ENCODE measurements at regions of chr2 and their contacts with region 1.

Region 1: DNA sequence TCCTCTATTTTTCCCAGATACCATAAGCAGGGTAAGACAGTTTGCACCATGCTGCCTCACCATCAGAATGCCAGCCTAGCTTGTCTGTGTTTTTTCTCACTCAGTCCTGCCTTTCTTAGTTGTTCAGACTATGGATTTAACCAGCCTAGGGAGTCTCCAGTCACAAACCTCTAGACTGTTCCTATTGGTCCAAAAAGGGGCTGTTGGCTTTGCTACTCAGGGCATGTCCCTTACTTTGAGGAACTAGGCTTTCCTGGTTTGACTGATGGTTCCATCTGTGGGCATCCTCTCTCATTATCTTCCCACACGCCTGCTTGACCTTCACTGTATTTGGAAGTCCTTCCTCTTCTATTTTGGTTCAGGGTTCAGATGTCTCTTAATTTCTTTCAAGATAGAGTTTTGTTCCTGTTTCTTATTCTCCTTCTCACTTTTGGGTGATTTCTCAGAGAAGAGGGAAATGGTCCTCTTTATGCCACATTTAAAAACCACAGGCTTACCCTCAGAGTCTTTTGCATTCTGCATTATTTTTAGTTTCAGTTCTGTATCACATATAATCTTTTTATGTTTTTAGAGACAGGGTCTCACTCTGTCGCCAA is 31.3 kb upstream of the TMEM131 start:
- DNase-seq: no peak
- ATAC-seq: peak; percentile 72
- H3K4me3 Mint-ChIP-seq: peak overlapping the region; percentile 80
- H3K27ac Mint-ChIP-seq: peak overlapping the region; percentile 96
- H3K4me1 Mint-ChIP-seq: peaks cover 67% of the 10 kb centered on the region
- H3K27me3 Mint-ChIP-seq: no peaks in the 10 kb centered on the region
- CTCF ChIP-seq: no peak

Region 2: DNA sequence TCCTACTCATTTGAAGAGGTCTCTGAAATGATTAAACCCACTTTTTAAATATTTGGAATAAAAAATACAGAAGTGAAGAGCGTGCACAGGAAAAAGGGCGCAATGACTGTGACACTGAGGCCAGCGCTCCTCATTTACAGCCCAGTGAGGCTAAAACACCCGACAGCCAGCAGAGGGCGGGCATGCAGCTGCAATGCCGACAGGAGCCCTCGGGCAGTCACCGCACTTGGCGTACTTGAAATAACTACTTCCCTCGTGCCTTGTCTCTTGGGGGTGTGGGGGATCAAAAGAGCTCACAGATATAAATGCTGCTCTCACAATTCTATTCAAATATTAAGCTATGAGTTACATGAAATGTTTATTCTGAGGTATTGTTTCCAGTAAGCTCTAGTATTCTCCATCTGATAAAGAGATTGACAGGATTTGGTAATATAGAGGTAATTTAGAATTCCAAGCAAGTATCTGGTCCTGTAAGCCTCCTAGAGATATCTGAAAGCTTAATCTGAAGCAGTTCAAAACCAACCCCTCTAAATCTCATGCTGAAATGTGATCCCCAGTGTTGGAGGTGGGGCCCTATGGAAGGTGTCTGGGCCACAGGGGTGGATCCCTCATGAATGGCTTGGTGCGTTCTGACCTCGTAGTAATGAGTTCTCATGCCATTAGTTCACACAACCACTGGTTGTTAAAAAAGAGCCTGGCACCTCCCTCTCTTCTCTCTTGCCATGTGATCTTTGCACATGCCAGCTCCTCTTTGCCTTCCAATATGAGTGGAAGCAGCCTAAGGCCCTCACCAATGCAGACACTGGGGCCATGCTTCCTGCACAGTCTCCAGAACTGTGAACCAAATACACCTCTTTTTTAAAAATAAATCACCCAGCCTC is 220.0 kb before region 1 on chr2:
- CTCF ChIA-PET with region 1: no interaction called
- POLR2A ChIA-PET with region 1: no interaction called
- intact Hi-C with region 1: loop called (anchors 1 kb)
- DNase-seq: peak; percentile 68
- ATAC-seq: peak; percentile 96
- H3K4me3 Mint-ChIP-seq: no peak overlapping the region
- H3K27ac Mint-ChIP-seq: no peak overlapping the region
- H3K4me1 Mint-ChIP-seq: no peaks in the 10 kb centered on the region
- H3K27me3 Mint-ChIP-seq: no peaks in the 10 kb centered on the region
- CTCF ChIP-seq: peak; percentile 33

Region 3: DNA sequence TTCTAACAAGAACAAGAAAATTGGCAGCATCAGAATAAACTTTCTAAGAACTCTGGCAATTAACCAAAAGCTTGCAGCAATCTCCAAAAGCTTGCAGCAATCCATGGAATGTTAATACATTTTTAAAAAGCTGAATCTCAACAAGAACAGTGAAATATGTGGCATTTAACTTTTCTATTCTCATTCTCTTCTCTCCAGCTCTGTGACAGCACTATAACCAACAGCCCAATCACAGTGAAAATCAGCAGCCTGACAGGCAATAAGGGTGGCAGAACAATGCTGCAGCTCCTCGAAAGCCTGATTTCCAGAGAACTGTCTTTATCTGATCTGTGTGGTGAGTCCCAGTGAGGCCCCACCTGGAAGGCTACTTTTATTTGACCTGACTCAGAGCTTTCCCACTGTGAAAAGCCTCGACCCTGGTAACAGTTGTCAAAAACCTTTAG is 91.3 kb before region 1 on chr2:
- CTCF ChIA-PET with region 1: no interaction called
- POLR2A ChIA-PET with region 1: interaction called, 5 read pairs
- intact Hi-C with region 1: loop called (anchors 1 kb)
- DNase-seq: no peak
- ATAC-seq: no peak
- H3K4me3 Mint-ChIP-seq: peak overlapping the region; percentile 56
- H3K27ac Mint-ChIP-seq: peak overlapping the region; percentile 65
- H3K4me1 Mint-ChIP-seq: peaks cover 96% of the 10 kb centered on the region
- H3K27me3 Mint-ChIP-seq: no peaks in the 10 kb centered on the region
- CTCF ChIP-seq: no peak

Region 4: DNA sequence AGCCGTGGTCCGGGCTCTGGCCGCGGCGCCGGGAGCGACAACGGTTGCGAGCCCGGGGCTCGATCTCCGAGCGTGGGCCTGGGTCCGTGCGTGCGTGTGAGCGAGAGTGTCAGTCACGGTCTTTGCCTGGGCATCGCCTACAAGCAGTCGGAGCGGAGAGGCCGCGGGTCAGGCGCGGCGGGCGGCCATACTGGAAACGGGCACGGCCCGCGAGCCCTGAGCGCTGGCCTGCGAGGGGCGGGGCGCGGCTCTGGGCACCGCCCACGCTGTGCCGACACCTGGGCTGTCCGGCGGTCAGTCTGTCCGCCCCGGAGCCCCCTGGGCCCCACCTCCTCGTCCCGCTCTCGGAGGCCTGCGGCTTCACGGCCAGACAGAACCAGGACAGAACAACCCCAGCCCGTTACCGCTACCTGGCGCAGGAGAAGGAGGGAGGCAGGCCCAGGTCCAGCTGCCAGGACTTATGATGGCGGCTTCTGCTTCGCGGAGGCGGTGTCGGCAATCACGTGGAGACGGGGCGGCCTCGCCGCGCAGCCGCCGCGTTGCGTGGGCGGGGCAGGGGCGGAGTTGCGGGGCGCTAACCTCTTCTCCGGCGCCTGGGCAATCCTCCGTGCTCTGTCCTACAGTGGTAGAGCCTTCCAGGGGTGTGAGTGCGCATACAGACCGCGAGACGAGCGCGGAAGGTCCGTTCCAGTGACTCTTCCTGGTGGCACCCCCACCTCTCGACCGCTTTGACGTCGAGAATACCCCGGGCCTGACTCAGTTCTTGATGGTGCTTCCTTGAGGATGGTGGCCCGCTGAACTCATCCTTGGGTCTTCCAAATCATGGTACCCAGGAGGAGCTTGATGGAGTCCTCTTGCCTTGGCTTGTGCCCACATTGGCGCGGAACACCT is 31.0 kb before region 1 on chr2 and contains the start of gene TMEM131:
- CTCF ChIA-PET with region 1: interaction called, 3 read pairs
- POLR2A ChIA-PET with region 1: interaction called, 38 read pairs
- intact Hi-C with region 1: loop called (anchors 1 kb)
- DNase-seq: peak; percentile 98
- ATAC-seq: peak; percentile 80
- H3K4me3 Mint-ChIP-seq: peak within 1 kb of the TSS; percentile 93
- H3K27ac Mint-ChIP-seq: peak within 1 kb of the TSS; percentile 91
- H3K4me1 Mint-ChIP-seq: peaks cover 49% of the 10 kb centered on the region
- H3K27me3 Mint-ChIP-seq: no peaks in the 10 kb centered on the region
- CTCF ChIP-seq: no peak
- total RNA-seq, gene TMEM131: 121 and 146 TPM in 2 replicates

Region 5: DNA sequence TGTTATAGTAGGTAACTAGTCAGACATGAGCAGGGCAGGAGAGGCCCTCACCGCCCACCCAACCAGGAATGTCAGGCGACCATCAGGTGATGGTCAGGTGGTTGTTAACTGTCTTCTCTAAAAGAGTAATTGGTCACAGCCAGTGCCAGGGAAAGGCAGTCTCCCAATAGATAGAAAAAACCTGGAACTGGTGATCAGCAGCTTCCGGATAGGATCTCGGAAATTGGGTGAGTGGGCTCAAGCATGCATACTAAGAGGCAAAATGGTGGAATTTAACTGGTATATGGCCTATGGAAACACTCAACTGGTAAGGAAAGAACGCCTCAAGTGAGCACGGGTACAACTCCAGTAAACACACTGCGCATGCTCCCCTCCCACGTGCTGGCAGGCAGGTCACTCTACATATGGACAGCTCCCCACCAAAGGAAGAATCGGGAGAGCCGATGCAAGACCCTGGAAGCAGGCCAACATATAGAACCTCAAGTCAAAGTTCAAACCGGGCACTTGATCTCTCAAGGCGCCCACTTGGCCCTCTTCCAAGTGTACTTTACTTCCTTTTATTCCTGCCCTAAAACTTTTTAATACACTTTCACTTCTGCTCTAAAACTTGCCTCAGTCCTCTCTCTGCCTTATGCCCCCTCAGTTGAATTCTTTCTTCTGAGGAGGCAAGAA is 12.2 kb after region 1 on chr2:
- CTCF ChIA-PET with region 1: interaction called, 5 read pairs
- POLR2A ChIA-PET with region 1: interaction called, 3 read pairs
- intact Hi-C with region 1: loop called (anchors 1 kb)
- DNase-seq: no peak
- ATAC-seq: peak; percentile 34
- H3K4me3 Mint-ChIP-seq: no peak overlapping the region
- H3K27ac Mint-ChIP-seq: peak overlapping the region; percentile 41
- H3K4me1 Mint-ChIP-seq: peaks cover 19% of the 10 kb centered on the region
- H3K27me3 Mint-ChIP-seq: no peaks in the 10 kb centered on the region
- CTCF ChIP-seq: no peak

Region 6: DNA sequence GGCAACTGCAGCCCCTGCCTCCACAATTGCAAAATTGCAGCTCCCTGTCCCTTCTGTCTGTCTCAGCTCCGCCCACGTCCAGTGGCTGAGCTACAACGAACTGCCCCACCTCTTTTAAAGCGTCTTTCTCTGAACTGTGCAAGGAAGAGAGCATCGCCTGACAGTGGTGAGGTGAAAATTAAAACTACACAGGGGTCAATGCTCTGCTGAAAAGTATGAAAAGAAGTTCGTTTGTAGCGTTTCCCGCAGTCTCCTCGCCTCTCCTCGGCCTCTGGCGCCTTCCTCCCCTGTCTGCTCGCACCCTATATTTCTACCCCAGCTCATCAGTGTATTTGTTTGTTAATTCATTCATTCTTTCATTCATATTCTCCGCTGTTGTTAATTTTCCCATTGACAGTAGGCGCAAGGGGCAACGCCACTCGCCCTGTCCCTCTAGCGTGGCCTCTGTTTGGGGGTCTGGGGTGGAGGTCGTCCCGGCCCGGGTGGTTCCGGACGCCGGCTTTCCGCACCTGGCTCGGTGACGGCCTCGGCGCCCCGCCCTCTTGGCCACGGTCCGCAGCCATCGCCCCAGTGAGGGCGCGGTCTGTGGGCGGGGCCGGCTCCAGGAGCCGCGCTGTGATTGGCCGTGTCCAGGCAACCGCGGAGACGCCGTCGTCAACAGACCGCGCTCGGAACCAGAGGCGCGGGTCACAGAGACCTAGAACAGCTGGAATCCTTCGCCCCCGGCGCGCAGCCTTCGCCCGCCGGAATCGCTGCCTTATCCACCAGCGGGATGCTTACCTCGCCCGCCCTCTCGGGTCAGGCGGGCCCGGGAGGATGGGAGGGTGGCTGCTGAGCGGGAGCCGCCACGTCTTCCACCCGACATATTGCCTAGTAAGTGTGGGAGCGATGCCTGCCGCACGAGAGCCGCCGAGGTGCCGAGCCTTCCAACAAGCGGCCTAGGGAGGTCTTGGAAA is 59.7 kb after region 1 on chr2 and contains the start of gene VWA3B:
- CTCF ChIA-PET with region 1: no interaction called
- POLR2A ChIA-PET with region 1: interaction called, 16 read pairs
- intact Hi-C with region 1: loop called (anchors 1 kb)
- DNase-seq: peak; percentile 83
- ATAC-seq: peak; percentile 93
- H3K4me3 Mint-ChIP-seq: peak within 1 kb of the TSS; percentile 89
- H3K27ac Mint-ChIP-seq: peak within 1 kb of the TSS; percentile 81
- H3K4me1 Mint-ChIP-seq: peaks cover 49% of the 10 kb centered on the region
- H3K27me3 Mint-ChIP-seq: no peaks in the 10 kb centered on the region
- CTCF ChIP-seq: no peak
- total RNA-seq, gene VWA3B: not detected in 2 replicates

Region 7: GRCh38 chr2:98444436-98445176 is 417.6 kb after region 1 on chr2 and contains the start of gene INPP4A:
- CTCF ChIA-PET with region 1: no interaction called
- POLR2A ChIA-PET with region 1: no interaction called
- intact Hi-C with region 1: loop called (anchors 10 kb)
- DNase-seq: peak; percentile 79
- ATAC-seq: peak; percentile 93
- H3K4me3 Mint-ChIP-seq: peak within 1 kb of the TSS; percentile 90
- H3K27ac Mint-ChIP-seq: peak within 1 kb of the TSS; percentile 82
- H3K4me1 Mint-ChIP-seq: peaks cover 23% of the 10 kb centered on the region
- H3K27me3 Mint-ChIP-seq: no peaks in the 10 kb centered on the region
- CTCF ChIP-seq: no peak
- total RNA-seq, gene INPP4A: 19.6 and 26.6 TPM in 2 replicates

Measured in activated B cell treated with CpG ODN at 0.5 μM for 24 hours (primary cell).